ENCODE measurements at regions of chr2 and their contacts with region 1.

Region 1: GRCh38 chr2:188506843-188507242 is 215.2 kb downstream of the GULP1 start:
- DNase-seq: no peak
- ATAC-seq: no peak
- H3K4me3 ChIP-seq: no peak overlapping the region
- H3K27ac ChIP-seq: no peak overlapping the region
- H3K4me1 ChIP-seq: no peaks in the 10 kb centered on the region
- H3K27me3 ChIP-seq: no peaks in the 10 kb centered on the region
- CTCF ChIP-seq: no peak
- POLR2A ChIP-seq: no peak
- RAD21 ChIP-seq: no peak

Region 2: GRCh38 chr2:187594801-187595200 is 912.0 kb before region 1 on chr2:
- CTCF ChIA-PET with region 1: no interaction called
- POLR2A ChIA-PET with region 1: no interaction called
- dilution Hi-C with region 1: no loop called
- in situ Hi-C with region 1: loop called (anchors 10 kb)
- intact Hi-C with region 1: no loop called
- DNase-seq: peak; percentile 44
- ATAC-seq: peak; percentile 69
- H3K4me3 ChIP-seq: no peak overlapping the region
- H3K27ac ChIP-seq: no peak overlapping the region
- H3K4me1 ChIP-seq: peaks cover 2% of the 10 kb centered on the region; the same call in 1 of the 2 replicates
- H3K27me3 ChIP-seq: no peaks in the 10 kb centered on the region; the same call in 1 of the 2 replicates
- CTCF ChIP-seq: peak; percentile 49
- POLR2A ChIP-seq: no peak
- RAD21 ChIP-seq: peak; percentile 50

Region 3: GRCh38 chr2:188076149-188077056 is 430.4 kb before region 1 on chr2:
- CTCF ChIA-PET with region 1: no interaction called
- POLR2A ChIA-PET with region 1: no interaction called
- dilution Hi-C with region 1: no loop called
- in situ Hi-C with region 1: no loop called
- intact Hi-C with region 1: loop called (anchors 10 kb)
- DNase-seq: peak; percentile 1
- ATAC-seq: no peak
- H3K4me3 ChIP-seq: no peak overlapping the region
- H3K27ac ChIP-seq: no peak overlapping the region
- H3K4me1 ChIP-seq: peaks cover 1% of the 10 kb centered on the region; the same call in 1 of the 2 replicates
- H3K27me3 ChIP-seq: peaks cover 2% of the 10 kb centered on the region; the same call in 1 of the 2 replicates
- CTCF ChIP-seq: no peak
- POLR2A ChIP-seq: no peak
- RAD21 ChIP-seq: no peak

Region 4: DNA sequence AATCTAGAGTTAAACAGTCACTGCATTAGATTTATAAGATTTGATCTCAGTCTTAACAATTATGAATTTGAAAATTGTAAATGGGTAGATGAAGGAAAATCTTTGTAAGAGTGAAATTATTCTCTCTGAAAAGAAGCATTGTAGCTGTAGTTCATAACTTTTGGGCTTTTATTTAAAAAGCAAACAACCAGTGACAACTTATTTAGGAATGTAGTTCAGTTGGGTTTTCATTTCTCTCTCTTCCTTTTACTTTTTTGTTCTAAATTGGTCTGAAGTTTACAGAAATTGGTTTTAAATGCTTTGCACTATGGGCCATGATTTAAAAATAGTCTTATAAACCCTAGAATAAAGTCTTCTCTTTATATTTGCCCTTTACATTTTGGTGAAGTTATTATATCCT is 81.4 kb after region 1 on chr2:
- CTCF ChIA-PET with region 1: no interaction called
- POLR2A ChIA-PET with region 1: no interaction called
- dilution Hi-C with region 1: no loop called
- in situ Hi-C with region 1: no loop called
- intact Hi-C with region 1: no loop called
- DNase-seq: peak; percentile 20
- ATAC-seq: peak; percentile 53
- H3K4me3 ChIP-seq: no peak overlapping the region
- H3K27ac ChIP-seq: no peak overlapping the region
- H3K4me1 ChIP-seq: no peaks in the 10 kb centered on the region
- H3K27me3 ChIP-seq: no peaks in the 10 kb centered on the region
- CTCF ChIP-seq: no peak
- POLR2A ChIP-seq: no peak
- RAD21 ChIP-seq: no peak